Lower leg skin (tissue), 4 donors: ENCODE measurements at regions of chr18 and their contacts with region 1.

Region 1: GRCh38 chr18:27879540-27879939 is 297.4 kb downstream of the CDH2 start:
- DNase-seq: no peak
- H3K4me3 ChIP-seq: no peak overlapping the region
- CTCF ChIP-seq: no peak
- POLR2A ChIP-seq: no peak

Region 2: DNA sequence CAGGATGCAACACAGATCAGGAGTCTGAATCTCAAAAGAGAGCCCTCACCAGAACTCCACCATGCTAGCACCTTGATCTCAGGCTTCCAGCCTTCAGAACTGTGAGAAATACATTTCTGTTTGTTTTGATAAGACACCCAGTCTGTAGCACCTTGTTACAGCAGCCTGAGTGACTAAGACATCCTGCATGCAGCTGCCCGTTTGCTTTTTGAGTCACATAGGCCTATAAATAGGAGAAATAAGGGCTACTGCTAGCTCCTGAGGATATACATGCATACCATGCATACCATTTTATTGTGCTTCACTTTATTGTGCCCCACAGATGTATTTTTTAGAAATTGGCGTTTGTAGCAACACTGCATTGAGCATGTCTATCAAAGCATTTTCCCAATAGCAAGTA is 40.4 kb before region 1 on chr18:
- intact Hi-C with region 1: loop called (anchors 1 kb)
- DNase-seq: no peak
- H3K4me3 ChIP-seq: no peak overlapping the region
- CTCF ChIP-seq: no peak
- POLR2A ChIP-seq: no peak